ENCODE measurements at regions of chr10 and their contacts with region 1.

Region 1: GRCh38 chr10:89609833-89610346 is 35.2 kb downstream of the PANK1 start:
- DNase-seq: peak; percentile 20 to 40
- ATAC-seq: peak; percentile 93 to 95
- H3K4me3 ChIP-seq: no peak overlapping the region
- H3K27ac ChIP-seq: peak overlapping the region in 3 of 4 donors; percentile 43 to 70 (median 54)
- H3K4me1 ChIP-seq: peaks cover 12 to 15% of the 10 kb centered on the region in 2 donors
- H3K27me3 ChIP-seq: no peaks in the 10 kb centered on the region
- CTCF ChIP-seq: no peak
- POLR2A ChIP-seq: no peak

Region 2: GRCh38 chr10:89490596-89491335 is 119.1 kb before region 1 on chr10:
- in situ Hi-C with region 1: no loop called
- intact Hi-C with region 1: no loop called
- DNase-seq: no peak
- ATAC-seq: no peak
- H3K4me3 ChIP-seq: no peak overlapping the region
- H3K27ac ChIP-seq: peak overlapping the region in 1 of 4 donors; percentile 13
- H3K4me1 ChIP-seq: no peaks in the 10 kb centered on the region
- H3K27me3 ChIP-seq: no peaks in the 10 kb centered on the region
- CTCF ChIP-seq: no peak
- POLR2A ChIP-seq: no peak

Region 3: GRCh38 chr10:89627830-89628229 is 17.9 kb after region 1 on chr10:
- in situ Hi-C with region 1: no loop called
- intact Hi-C with region 1: loop called (anchors 2 kb)
- DNase-seq: no peak
- ATAC-seq: no peak
- H3K4me3 ChIP-seq: no peak overlapping the region
- H3K27ac ChIP-seq: no peak overlapping the region
- H3K4me1 ChIP-seq: peaks cover 47 to 50% of the 10 kb centered on the region in 2 donors
- H3K27me3 ChIP-seq: no peaks in the 10 kb centered on the region
- CTCF ChIP-seq: no peak
- POLR2A ChIP-seq: no peak

Region 4: DNA sequence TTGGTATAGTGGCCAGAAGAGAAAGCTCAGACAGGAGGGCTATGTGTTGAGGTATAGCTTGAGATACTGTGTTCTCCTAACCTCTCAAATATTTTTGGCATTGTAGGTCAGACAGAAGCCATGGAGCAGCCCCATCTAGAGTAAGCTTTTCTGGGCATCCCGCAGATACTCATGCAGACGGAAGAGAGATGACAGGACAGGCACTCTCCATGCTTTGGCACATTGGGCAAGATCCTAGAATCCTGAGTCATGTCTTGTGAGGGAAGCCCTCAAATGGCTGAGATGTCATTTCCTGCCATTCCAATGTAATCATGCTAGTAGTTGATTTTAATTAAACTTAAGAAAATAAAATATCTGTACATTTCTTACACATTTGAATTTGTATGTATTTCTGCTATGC is 74.7 kb after region 1 on chr10:
- in situ Hi-C with region 1: no loop called
- intact Hi-C with region 1: loop called (anchors 5 kb)
- DNase-seq: no peak
- ATAC-seq: peak in 1 of 2 donors; percentile 26
- H3K4me3 ChIP-seq: no peak overlapping the region
- H3K27ac ChIP-seq: no peak overlapping the region
- H3K4me1 ChIP-seq: no peaks in the 10 kb centered on the region
- H3K27me3 ChIP-seq: no peaks in the 10 kb centered on the region
- CTCF ChIP-seq: no peak
- POLR2A ChIP-seq: no peak